ENCODE measurements at regions of chr20 and their contacts with region 1.

Region 1: DNA sequence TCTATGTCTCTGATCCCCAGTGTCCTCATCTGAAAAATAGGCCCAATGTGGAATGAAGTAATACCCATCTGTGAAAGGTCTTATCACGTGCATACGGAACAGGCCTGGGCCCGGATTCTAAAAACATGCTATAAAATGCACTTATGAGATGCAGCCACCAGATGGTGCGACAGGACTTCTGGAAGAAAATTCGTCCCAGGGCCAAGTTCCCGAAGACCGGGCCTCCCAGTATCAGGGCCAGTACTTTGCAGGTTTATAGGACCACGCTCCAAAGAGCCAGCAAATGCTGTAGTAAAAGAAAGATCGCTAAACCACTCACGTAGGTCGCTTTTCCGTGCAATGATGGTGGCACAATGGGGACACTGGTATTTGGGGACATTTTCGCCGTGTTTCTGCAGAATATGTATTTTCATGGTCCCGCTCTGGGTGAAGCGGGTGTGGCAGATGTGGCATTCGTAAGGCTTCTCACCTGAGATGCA is 10.6 kb downstream of the CTCFL start:
- DNase-seq: peak; percentile 45 to 90 (median 75)

Region 2: GRCh38 chr20:57586370-57586793 is 72.1 kb after region 1 on chr20:
- intact Hi-C with region 1: loop called (anchors 2 kb)
- DNase-seq: peak in 18 of 42 donors; percentile 16 to 55 (median 28)

Region 3: DNA sequence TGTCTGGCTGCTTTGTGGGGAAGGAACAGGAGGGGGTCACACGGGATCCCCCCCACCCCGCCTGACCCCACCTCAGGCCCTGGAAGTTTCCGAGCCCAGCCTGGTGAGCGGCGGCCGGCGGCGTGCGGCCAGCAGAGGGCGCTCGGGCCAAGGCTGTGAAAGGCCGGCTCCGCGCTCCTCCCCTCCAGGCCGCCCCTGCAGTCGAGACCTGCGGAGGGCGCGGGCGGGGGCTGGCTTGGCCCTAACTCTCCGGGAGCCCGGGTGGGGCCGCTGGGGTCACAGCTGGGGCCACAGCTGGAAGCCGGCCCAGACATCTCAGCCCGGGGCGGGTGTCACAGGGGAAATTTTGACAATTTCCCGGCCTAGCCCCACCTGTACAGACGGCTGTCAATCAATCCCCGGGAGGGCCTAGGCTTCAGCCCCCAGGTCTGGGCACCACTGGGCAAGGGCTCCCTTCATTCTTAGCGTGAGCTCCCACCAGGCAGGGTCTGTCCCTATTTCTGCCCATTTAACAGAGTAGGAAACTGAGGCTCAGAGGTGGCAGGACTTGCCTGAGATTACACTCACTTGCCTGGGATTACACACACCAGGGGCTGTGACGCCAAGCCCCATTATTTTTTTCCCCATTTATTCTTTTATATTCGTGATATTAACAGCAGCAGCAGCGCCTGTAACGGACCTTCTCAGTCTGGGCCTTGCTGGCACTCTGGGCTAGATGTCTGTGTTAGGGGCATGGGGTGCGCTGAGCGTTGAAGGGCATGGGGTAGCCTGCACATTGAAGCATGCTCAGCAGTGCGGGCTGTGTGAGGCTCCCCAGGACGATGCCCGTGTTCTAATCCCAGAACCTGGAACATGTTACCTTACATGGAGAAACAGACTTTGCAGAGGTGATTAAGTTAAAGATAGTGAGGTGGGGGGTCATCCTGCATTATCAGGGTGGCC is 83.0 kb after region 1 on chr20:
- intact Hi-C with region 1: loop called (anchors 2 kb)
- DNase-seq: peak; percentile 45 to 89 (median 75)

Region 4: GRCh38 chr20:58209652-58210397 is 695.5 kb after region 1 on chr20:
- intact Hi-C with region 1: loop called (anchors 10 kb)
- DNase-seq: peak; percentile 60 to 95 (median 88)

Measured in head of caudate nucleus (tissue), 42 donors.